ENCODE measurements at regions of chr10 and their contacts with region 1.

Region 1: DNA sequence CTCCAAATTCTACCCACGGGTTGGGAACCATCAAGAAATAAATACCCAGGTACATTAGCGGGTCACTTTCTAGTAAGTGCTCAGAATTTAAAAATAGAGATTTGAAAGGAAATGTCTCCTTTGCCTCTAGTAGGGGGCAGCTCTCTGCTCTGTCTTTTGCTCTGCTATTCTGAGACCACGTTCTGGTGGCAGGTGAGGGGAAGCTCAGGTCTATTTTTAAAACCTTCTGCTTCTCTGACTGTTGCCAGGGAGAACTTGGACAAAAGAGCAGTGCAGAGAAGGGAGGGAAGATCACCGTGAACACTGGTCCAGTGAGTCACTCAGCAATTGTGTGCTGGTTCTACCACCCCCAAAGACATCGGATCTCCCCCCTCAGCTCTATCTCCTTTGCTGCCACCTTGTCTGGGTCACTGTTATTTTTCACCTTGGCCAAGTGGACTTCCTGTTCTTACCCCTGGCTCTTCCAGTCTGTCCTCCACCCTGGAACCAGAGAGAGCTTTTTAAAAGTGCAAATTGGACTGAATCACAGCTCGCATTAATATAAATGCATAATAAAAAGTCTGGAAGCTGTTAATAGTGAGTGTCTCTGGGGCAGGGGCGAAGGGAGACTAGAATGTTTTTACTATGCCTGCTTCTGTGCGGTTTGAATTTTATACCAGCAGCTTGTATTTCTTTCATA is 72.4 kb upstream of the LOXL4 start:
- DNase-seq: no peak
- ATAC-seq: peak; percentile 45
- H3K4me3 Mint-ChIP-seq: peak overlapping the region; percentile 66
- H3K27ac Mint-ChIP-seq: peak overlapping the region; percentile 12
- H3K4me1 Mint-ChIP-seq: peaks cover 43% of the 10 kb centered on the region
- H3K27me3 Mint-ChIP-seq: peaks cover 11% of the 10 kb centered on the region
- CTCF ChIP-seq: no peak

Region 2: GRCh38 chr10:98363230-98363629 is 22.8 kb after region 1 on chr10:
- CTCF ChIA-PET with region 1: no interaction called
- POLR2A ChIA-PET with region 1: interaction called, 14 read pairs
- intact Hi-C with region 1: no loop called
- DNase-seq: no peak
- ATAC-seq: no peak
- H3K4me3 Mint-ChIP-seq: no peak overlapping the region
- H3K27ac Mint-ChIP-seq: no peak overlapping the region
- H3K4me1 Mint-ChIP-seq: peaks cover 13% of the 10 kb centered on the region
- H3K27me3 Mint-ChIP-seq: peaks cover 2% of the 10 kb centered on the region
- CTCF ChIP-seq: no peak

Measured in activated B cell treated with CpG ODN at 0.5 μM for 24 hours (primary cell).